Activated CD8-positive, alpha-beta T cell treated with anti-CD3 and anti-CD28 coated beads for 36 hours (primary cell): ENCODE measurements at regions of chr2 and their contacts with region 1.

Region 1: GRCh38 chr2:46634905-46635304 is 155.5 kb downstream of the TMEM247 start:
- DNase-seq: no peak
- ATAC-seq: peak; percentile 81
- H3K4me3 Mint-ChIP-seq: no peak overlapping the region
- H3K27ac Mint-ChIP-seq: peak overlapping the region; percentile 7
- H3K4me1 Mint-ChIP-seq: peaks cover 12% of the 10 kb centered on the region
- H3K27me3 Mint-ChIP-seq: no peaks in the 10 kb centered on the region
- CTCF ChIP-seq: no peak

Region 2: GRCh38 chr2:46645681-46646162 is 10.8 kb after region 1 on chr2:
- CTCF ChIA-PET with region 1: interaction called, 12 read pairs
- POLR2A ChIA-PET with region 1: no interaction called
- intact Hi-C with region 1: no loop called
- DNase-seq: no peak
- ATAC-seq: no peak
- H3K4me3 Mint-ChIP-seq: no peak overlapping the region
- H3K27ac Mint-ChIP-seq: no peak overlapping the region
- H3K4me1 Mint-ChIP-seq: peaks cover 7% of the 10 kb centered on the region
- H3K27me3 Mint-ChIP-seq: no peaks in the 10 kb centered on the region
- CTCF ChIP-seq: no peak